Endothelial cell of umbilical vein (primary cell): ENCODE measurements at regions of chr1 and their contacts with region 1.

Region 1: DNA sequence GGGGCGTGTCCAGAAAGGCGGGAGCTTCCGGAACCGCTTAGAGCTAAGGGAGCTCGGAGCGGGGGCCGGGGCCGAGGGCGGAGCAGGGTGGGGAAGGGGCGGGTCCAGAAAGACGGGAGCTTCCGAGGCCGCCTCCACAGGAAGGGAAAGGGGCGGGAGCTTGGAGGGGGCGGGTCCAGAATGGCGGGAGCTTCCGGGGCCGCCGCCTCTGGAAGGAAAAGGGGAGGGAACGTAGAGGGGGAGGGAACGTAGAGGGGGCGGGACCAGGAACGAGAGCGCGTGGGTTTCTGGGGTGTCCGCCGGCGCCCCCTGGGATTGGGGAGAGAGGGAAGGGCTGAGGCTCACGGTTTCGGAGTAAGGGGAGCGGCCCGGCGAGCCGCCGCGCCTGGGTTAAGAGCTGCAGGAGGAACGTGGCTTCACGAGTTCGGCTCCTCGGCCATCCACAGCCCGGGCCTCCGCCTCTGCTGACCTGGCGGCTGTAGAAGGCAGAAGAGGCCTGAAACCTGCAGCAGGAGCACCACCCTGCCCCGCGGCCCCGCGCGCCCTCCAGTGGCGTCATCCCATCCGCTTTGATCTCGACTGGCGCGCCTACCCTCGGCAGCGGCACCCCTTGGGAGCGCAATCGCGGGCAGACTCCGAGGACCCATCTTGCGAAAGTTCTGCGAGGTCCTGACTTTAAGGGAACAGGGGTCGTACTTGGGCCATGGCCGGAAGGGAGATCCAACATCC is 22.9 kb upstream of the HPDL start:
- DNase-seq: peak; percentile 98
- H3K4me3 ChIP-seq: peak overlapping the region; percentile 51 to 60 (median 54)
- H3K27ac ChIP-seq: peak overlapping the region; percentile 67
- H3K4me1 ChIP-seq: peaks cover 14% of the 10 kb centered on the region
- H3K27me3 ChIP-seq: no peaks in the 10 kb centered on the region
- CTCF ChIP-seq: peak; percentile 54 to 74
- POLR2A ChIP-seq: peak; percentile 74

Region 2: GRCh38 chr1:44730741-44731512 is 572.8 kb before region 1 on chr1 and contains the start of gene RNU5D-1:
- CTCF ChIA-PET with region 1: interaction called, 3 read pairs
- POLR2A ChIA-PET with region 1: no interaction called
- dilution Hi-C with region 1: no loop called
- intact Hi-C with region 1: loop called (anchors 1 kb)
- DNase-seq: peak; percentile 97
- H3K4me3 ChIP-seq: no peak within 1 kb of the TSS
- H3K27ac ChIP-seq: peak within 1 kb of the TSS; percentile 89
- H3K4me1 ChIP-seq: peaks cover 2% of the 10 kb centered on the region
- H3K27me3 ChIP-seq: no peaks in the 10 kb centered on the region
- CTCF ChIP-seq: peak; percentile 77 to 84
- POLR2A ChIP-seq: peak; percentile 100
- total RNA-seq, gene RNU5D-1: not detected in 2 replicates

Region 3: DNA sequence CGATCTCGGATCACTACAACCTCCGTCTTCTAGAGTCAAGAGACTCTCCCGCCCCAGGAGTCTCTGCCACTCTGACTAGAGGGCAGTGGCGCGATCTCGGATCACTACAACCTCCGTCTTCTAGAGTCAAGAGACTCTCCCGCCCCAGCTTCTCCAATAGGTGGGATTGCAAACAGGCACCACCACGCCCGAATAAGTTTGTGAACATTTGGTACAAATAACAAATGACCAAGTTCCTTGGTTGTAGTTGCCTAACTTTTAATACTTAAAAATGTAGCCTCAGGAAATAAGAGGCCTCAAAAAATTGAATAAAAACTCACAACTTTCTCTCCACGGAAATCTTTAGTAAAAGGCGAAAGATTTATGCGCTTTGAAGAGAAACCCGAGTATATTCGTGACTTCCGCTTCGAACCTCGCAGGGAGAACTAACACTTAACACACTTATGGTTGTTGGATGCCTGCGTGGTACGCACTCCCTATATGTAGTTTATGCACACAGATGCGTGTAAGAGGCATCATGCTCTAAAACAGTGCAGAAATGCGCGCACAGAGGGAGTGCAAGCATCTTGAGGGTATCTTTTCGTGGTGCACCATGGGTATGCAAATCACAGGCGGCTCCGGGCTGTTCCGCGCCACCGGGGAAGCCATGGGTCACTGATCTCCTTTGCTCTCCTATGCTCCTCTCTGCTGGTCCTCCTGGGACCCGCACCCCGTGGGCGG is 484.0 kb before region 1 on chr1:
- CTCF ChIA-PET with region 1: no interaction called
- POLR2A ChIA-PET with region 1: interaction called, 11 read pairs
- dilution Hi-C with region 1: no loop called
- intact Hi-C with region 1: no loop called
- DNase-seq: peak; percentile 82
- H3K4me3 ChIP-seq: peak overlapping the region; percentile 5 to 62 (median 17)
- H3K27ac ChIP-seq: peak overlapping the region; percentile 91
- H3K4me1 ChIP-seq: peaks cover 10% of the 10 kb centered on the region
- H3K27me3 ChIP-seq: no peaks in the 10 kb centered on the region
- CTCF ChIP-seq: no peak
- POLR2A ChIP-seq: peak; percentile 100

Region 4: DNA sequence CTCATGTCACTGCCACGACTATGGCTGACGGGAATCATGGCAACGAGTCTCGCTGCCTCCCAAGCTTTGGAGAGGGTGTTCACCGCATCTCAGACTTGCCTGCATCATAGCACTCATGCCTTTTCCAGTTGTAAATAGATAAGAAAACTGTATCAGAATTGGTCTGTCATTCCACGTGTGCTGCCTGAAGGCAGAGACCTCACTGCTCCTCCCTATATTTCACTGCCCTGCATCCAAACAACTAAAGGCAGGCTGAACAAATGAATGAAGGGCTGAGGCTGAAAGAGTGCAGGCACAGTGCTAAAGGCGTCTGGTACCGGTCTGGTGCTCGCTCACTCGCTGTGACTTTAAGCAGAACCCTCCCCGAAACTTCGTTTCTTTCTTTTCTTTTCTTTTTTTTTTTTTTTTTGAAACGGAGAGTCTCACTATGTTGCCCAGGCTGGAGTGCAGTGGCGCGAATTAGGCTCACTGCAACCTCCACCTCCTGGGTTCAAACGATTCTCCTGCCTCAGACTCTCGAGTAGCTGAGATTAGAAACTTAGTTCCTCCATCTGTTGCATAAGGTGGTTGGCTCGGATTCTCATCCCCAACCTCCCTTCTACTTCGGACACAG is 317.9 kb before region 1 on chr1:
- CTCF ChIA-PET with region 1: no interaction called
- POLR2A ChIA-PET with region 1: no interaction called
- dilution Hi-C with region 1: no loop called
- intact Hi-C with region 1: loop called (anchors 1 kb)
- DNase-seq: peak; percentile 23
- H3K4me3 ChIP-seq: peak overlapping the region; percentile 42 to 89 (median 67)
- H3K27ac ChIP-seq: peak overlapping the region; percentile 4
- H3K4me1 ChIP-seq: peaks cover 8% of the 10 kb centered on the region
- H3K27me3 ChIP-seq: no peaks in the 10 kb centered on the region
- CTCF ChIP-seq: no peak
- POLR2A ChIP-seq: no peak

Region 5: DNA sequence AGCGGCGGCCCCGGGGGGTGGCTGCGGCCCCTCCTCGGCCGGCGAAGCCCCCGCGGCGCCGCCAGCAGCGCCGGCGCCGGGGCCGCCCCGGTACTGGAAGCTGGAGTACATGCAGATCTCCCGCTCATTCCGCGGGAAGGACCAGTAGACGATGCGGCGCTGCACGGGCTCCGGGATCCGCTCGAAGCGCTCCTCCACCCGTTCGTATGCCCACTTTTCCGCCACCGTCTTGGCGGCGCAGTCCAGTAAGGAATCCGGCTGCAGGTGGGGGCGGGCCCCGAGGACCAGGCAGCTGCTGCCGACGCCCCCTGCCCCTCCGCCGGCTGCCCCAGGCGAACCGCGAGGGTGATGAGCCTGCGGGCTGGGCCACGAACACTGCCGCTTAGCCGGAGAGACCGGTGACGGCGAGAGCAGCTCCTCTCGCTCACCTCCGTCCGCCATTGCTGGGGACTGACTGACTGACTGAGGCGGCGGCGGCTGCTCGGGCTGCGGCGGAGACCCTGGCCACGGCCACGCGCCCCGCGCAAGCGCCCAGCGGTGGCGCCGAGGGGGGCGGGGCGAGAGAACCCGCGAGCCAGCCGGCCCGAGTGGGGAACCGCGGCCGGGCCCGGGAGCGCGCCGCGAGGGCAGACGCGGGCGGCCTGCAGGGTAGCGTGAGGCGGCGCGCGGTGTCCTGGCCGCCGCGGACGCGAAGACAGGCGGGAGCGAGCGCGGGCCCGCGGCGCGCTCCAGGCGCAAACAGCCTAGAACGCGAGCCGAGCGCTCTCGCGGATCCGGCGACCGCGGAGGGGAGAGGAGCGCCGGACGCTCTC is 97.6 kb before region 1 on chr1 and contains the start of gene ZSWIM5:
- CTCF ChIA-PET with region 1: interaction called, 17 read pairs
- POLR2A ChIA-PET with region 1: no interaction called
- dilution Hi-C with region 1: no loop called
- intact Hi-C with region 1: loop called (anchors 1 kb)
- DNase-seq: peak; percentile 65
- H3K4me3 ChIP-seq: peak within 1 kb of the TSS; percentile 53 to 96 (median 72)
- H3K27ac ChIP-seq: no peak within 1 kb of the TSS
- H3K4me1 ChIP-seq: peaks cover 9% of the 10 kb centered on the region
- H3K27me3 ChIP-seq: no peaks in the 10 kb centered on the region
- CTCF ChIP-seq: no peak
- POLR2A ChIP-seq: no peak
- total RNA-seq, gene ZSWIM5: 1.6 and 1.7 TPM in 2 replicates

Region 6: GRCh38 chr1:45326627-45327623 is 23.2 kb after region 1 on chr1 and contains the start of gene HPDL:
- CTCF ChIA-PET with region 1: interaction called, 14 read pairs
- POLR2A ChIA-PET with region 1: interaction called, 3 read pairs
- dilution Hi-C with region 1: no loop called
- intact Hi-C with region 1: loop called (anchors 1 kb)
- DNase-seq: peak; percentile 53
- H3K4me3 ChIP-seq: peak within 1 kb of the TSS; percentile 12 to 48 (median 43)
- H3K27ac ChIP-seq: peak within 1 kb of the TSS; percentile 24
- H3K4me1 ChIP-seq: peaks cover 18% of the 10 kb centered on the region
- H3K27me3 ChIP-seq: no peaks in the 10 kb centered on the region
- CTCF ChIP-seq: no peak
- POLR2A ChIP-seq: peak; percentile 71
- total RNA-seq, gene HPDL: 5.6 and 5.9 TPM in 2 replicates

Region 7: DNA sequence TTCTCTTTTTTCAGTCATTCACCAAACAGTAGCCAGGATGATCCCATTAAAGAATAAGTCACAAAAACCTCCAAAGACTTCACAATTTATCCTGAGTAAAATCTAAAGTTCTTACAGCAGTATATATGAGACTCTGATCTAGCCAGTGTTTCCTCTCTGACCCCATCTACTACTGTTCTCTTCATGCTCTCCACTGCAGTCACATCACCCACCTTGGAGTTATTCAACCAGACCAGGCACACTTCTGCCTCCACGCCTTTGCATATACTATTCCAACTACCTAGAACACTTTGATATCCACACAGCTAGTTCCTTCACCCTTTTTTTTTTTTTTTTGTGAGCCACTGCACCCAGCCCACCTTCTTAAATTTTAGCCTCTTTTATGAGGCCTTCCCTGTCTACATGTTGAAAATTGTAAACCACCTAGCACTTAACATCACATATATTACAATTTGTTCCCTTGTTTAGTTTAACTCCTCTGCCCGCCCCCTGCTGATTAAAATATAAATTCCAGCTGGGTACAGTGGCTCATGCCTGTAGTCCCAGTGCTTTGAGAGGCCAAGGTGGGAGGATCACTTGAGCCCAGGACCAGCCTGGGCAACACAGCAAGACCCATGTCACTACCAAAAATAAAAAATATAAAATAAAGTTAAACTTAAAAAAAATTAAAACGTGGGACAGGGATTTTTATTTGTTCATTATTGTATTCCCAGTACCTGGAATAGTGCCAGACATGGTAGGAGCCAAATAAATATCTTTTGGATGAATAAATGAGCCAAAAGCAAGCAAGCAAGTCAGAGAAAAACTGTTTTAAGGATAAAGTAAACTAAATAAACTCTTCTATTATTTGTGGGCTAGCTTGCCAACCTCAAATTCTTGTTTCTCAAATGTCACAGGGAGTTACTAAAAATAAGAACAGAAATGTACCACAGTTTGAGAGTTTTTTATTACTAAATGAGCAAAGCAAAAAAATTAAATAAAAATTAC is 71.7 kb after region 1 on chr1:
- CTCF ChIA-PET with region 1: no interaction called
- POLR2A ChIA-PET with region 1: no interaction called
- dilution Hi-C with region 1: no loop called
- intact Hi-C with region 1: no loop called
- DNase-seq: no peak
- H3K4me3 ChIP-seq: no peak overlapping the region
- H3K27ac ChIP-seq: no peak overlapping the region
- H3K4me1 ChIP-seq: no peaks in the 10 kb centered on the region
- H3K27me3 ChIP-seq: peaks cover 0 to 1% of the 10 kb centered on the region in 2 experiments
- CTCF ChIP-seq: no peak
- POLR2A ChIP-seq: no peak

Region 8: GRCh38 chr1:45490626-45491486 is 187.1 kb after region 1 on chr1 and contains the start of gene TESK2:
- CTCF ChIA-PET with region 1: interaction called, 32 read pairs
- POLR2A ChIA-PET with region 1: interaction called, 5 read pairs
- dilution Hi-C with region 1: no loop called
- intact Hi-C with region 1: loop called (anchors 1 kb)
- DNase-seq: peak; percentile 100
- H3K4me3 ChIP-seq: peak within 1 kb of the TSS; percentile 53 to 63 (median 56)
- H3K27ac ChIP-seq: no peak within 1 kb of the TSS
- H3K4me1 ChIP-seq: peaks cover 6% of the 10 kb centered on the region
- H3K27me3 ChIP-seq: peaks cover 8 to 10% of the 10 kb centered on the region in 2 experiments
- CTCF ChIP-seq: peak in 1 of 2 donors; percentile 32
- POLR2A ChIP-seq: no peak
- total RNA-seq, gene TESK2: 2.1 and 2.2 TPM in 2 replicates